ENCODE measurements at regions of chr2 and their contacts with region 1.

Region 1: GRCh38 chr2:26144953-26145680 is 27.8 kb upstream of the GAREM2 start:
- DNase-seq: peak; percentile 44
- H3K4me3 Mint-ChIP-seq: no peak overlapping the region
- H3K27ac Mint-ChIP-seq: no peak overlapping the region
- H3K4me1 Mint-ChIP-seq: peaks cover 3% of the 10 kb centered on the region
- H3K27me3 Mint-ChIP-seq: peaks cover 11% of the 10 kb centered on the region

Region 2: DNA sequence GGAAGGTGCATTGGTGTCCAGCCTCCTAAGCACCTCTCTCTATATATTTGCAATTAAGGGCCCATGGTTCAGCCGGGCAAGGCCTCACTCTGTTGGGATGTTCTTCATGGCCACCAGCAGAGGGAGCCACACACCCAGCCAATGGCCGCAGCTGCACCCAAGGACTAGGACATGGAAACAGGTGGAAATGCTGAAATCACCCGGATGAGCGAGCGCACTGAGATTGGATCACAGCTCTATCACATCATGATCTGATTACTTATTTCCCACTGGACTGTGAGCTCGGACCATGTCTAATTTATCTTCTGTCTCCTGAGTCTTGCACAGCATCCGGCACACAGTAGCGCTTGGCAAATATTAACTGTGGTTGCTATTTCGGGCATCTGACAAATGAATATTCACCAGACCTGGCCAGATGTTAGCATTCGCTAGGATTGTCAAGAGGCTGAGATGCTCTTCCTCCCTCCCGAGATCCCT is 194.0 kb before region 1 on chr2:
- intact Hi-C with region 1: loop called (anchors 1 kb)
- DNase-seq: peak; percentile 59
- H3K4me3 Mint-ChIP-seq: no peak overlapping the region
- H3K27ac Mint-ChIP-seq: no peak overlapping the region
- H3K4me1 Mint-ChIP-seq: no peaks in the 10 kb centered on the region
- H3K27me3 Mint-ChIP-seq: no peaks in the 10 kb centered on the region

Measured in activated T-helper 2 cell treated with anti-CD3 and anti-CD28 coated beads, Interferon-gamma antibody, Interleukin-2, Interleukin-4, amounts not matched to agents 10 μg/mL and 5 μg/mL and 100 μg/mL, durations not matched to agents 14 hours and 24 hours and 36 hours (primary cell).